Activated CD4-positive, alpha-beta memory T cell treated with anti-CD3 and anti-CD28 coated beads for 36 hours (primary cell): ENCODE measurements at regions of chr4 and their contacts with region 1.

Region 1: GRCh38 chr4:82462415-82462831 is 32.0 kb downstream of the ENOPH1 start:
- DNase-seq: peak; percentile 88
- H3K4me3 Mint-ChIP-seq: no peak overlapping the region
- H3K27ac Mint-ChIP-seq: no peak overlapping the region
- H3K4me1 Mint-ChIP-seq: peaks cover 2% of the 10 kb centered on the region
- H3K27me3 Mint-ChIP-seq: no peaks in the 10 kb centered on the region

Region 2: GRCh38 chr4:82422616-82423015 is 39.8 kb before region 1 on chr4:
- CTCF ChIA-PET with region 1: no interaction called
- POLR2A ChIA-PET with region 1: no interaction called
- intact Hi-C with region 1: no loop called
- DNase-seq: no peak
- H3K4me3 Mint-ChIP-seq: no peak overlapping the region
- H3K27ac Mint-ChIP-seq: peak overlapping the region; percentile 15
- H3K4me1 Mint-ChIP-seq: peaks cover 42% of the 10 kb centered on the region
- H3K27me3 Mint-ChIP-seq: peaks cover 7% of the 10 kb centered on the region

Region 3: DNA sequence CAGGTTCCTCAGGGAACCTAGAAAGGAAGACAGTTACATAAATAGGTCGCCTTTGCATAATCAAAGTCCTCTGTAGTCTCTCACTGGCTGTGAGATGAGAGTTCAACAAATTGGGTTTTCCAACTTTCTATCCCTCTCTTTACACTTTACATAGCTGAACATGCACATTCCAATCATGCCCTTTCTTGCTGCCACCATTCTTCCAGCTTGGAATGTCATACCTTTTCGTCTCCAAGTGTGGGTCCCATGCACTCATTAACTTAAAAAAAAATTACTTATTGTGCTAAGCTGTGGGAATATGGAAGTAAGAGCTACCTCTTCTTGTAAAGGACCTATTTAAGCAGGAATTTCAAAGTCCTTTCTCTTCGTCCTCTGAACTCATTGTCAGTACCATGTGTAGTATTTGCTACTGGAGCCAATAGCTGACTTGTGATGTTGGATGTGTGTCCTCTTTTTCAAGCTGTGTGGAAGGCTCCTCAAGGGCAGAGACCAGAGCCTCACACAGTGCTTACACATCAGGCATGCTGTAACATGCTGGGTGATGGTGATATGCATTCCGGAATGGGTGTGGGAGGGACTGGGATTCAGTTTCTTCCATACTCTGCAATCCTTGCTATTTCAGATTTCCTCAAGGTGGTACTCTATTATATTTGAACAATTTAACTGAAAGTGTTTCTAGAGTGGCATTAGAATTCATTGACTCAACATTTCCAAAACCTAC is 25.0 kb before region 1 on chr4:
- CTCF ChIA-PET with region 1: interaction called, 19 read pairs
- POLR2A ChIA-PET with region 1: no interaction called
- intact Hi-C with region 1: no loop called
- DNase-seq: no peak
- H3K4me3 Mint-ChIP-seq: no peak overlapping the region
- H3K27ac Mint-ChIP-seq: no peak overlapping the region
- H3K4me1 Mint-ChIP-seq: peaks cover 75% of the 10 kb centered on the region
- H3K27me3 Mint-ChIP-seq: no peaks in the 10 kb centered on the region